Activated naive CD8-positive, alpha-beta T cell treated with anti-CD3 and anti-CD28 coated beads, Interleukin-2, amount 10 ng/mL, durations not matched to agents 7 days and 5 days (primary cell): ENCODE measurements at regions of chr2 and their contacts with region 1.

Region 1: DNA sequence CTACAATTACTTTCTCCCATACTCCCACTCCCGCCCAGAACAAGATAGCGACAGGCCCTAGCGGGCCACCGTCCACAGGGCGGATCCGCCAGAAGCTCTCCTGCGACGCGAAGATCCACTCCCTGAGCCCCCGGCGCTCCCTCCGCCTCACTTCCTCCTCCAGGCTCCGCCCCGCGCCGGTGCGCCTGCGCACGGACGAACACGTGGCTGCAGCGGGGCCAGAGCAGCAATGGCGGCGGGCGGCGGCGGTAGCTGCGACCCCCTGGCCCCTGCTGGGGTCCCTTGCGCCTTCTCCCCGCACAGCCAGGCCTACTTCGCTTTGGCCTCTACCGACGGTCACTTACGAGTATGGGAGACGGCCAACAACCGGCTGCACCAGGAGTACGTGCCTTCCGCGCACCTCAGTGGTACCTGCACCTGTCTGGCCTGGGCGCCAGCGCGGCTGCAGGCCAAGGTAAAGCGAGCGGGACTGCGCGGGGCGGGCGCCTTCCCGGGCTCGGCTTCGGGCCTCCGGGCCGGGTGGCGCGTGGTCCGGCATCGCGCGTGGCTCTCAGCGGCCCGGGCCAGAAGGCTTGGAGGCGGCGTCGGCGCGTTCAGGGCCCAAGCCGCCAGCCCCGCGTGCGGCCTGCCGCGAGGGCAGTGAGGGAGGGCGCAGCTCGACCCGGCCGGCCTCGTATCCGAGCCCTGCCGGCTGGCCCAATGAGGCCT is at the start of gene WDR43:
- DNase-seq: peak; percentile 99
- ATAC-seq: peak; percentile 98
- H3K4me3 Mint-ChIP-seq: peak within 1 kb of the TSS; percentile 91
- H3K27ac Mint-ChIP-seq: peak within 1 kb of the TSS; percentile 89
- H3K4me1 Mint-ChIP-seq: peaks cover 31% of the 10 kb centered on the region
- H3K27me3 Mint-ChIP-seq: no peaks in the 10 kb centered on the region
- total RNA-seq, gene WDR43: 50.3 to 54.3 TPM

Region 2: GRCh38 chr2:28870146-28870891 is 24.3 kb before region 1 on chr2 and contains the start of gene TRMT61B:
- POLR2A ChIA-PET with region 1: interaction called, 73 read pairs
- DNase-seq: peak; percentile 97
- ATAC-seq: peak; percentile 99
- H3K4me3 Mint-ChIP-seq: peak within 1 kb of the TSS; percentile 94
- H3K27ac Mint-ChIP-seq: peak within 1 kb of the TSS; percentile 97
- H3K4me1 Mint-ChIP-seq: peaks cover 20% of the 10 kb centered on the region
- H3K27me3 Mint-ChIP-seq: peaks cover 16% of the 10 kb centered on the region
- total RNA-seq, gene TRMT61B: 15.1 to 16.0 TPM

Region 3: DNA sequence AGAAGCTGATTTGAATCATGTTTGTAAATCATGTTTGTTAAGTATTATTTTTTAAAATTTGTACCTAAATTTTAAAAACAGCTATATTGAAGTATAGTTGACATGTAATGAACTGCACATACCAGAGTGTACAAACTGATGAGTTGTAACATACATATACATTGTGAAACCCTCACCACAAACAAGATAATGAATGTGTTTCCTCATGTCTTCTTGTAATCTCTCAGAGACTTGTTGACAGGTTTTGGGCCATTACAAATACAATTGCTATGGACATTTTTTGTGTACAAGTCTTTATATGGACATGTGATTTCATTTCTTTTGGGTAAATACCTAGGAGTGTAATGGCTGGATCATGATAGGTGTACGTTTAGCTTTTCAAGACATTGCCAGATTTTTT is 21.3 kb after region 1 on chr2:
- POLR2A ChIA-PET with region 1: no interaction called
- DNase-seq: no peak
- ATAC-seq: no peak
- H3K4me3 Mint-ChIP-seq: no peak overlapping the region
- H3K27ac Mint-ChIP-seq: no peak overlapping the region
- H3K4me1 Mint-ChIP-seq: peaks cover 9% of the 10 kb centered on the region
- H3K27me3 Mint-ChIP-seq: no peaks in the 10 kb centered on the region

Region 4: DNA sequence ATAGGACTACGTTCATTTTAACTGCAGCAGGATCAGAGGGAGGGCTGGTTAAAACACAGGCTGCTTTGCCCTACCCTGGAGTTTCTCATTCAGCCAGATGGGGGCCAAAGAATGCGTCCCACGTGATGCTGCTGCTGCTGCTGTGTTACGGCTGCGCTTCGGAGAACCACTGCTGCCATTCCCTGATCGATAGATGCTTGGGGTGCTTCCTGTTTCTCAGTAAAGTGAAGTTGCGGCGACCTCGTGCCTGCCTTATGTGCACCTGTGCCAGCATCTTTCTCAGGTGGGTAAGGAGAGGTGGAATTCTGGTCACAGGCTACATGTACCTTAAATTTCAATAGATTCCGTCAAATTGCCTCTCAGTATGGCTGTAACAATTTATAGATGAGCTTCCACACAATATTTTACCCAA is 61.8 kb after region 1 on chr2:
- POLR2A ChIA-PET with region 1: no interaction called
- DNase-seq: peak; percentile 53
- ATAC-seq: peak; percentile 77
- H3K4me3 Mint-ChIP-seq: peak overlapping the region; percentile 71
- H3K27ac Mint-ChIP-seq: peak overlapping the region; percentile 9
- H3K4me1 Mint-ChIP-seq: peaks cover 20% of the 10 kb centered on the region
- H3K27me3 Mint-ChIP-seq: no peaks in the 10 kb centered on the region